ENCODE measurements at regions of chr3 and their contacts with region 1.

Region 1: GRCh38 chr3:45037734-45038455 is 11.8 kb downstream of the CLEC3B start:
- DNase-seq: peak; percentile 95
- ATAC-seq: peak; percentile 84
- H3K4me3 Mint-ChIP-seq: no peak overlapping the region
- H3K27ac Mint-ChIP-seq: no peak overlapping the region
- H3K4me1 Mint-ChIP-seq: peaks cover 45% of the 10 kb centered on the region
- H3K27me3 Mint-ChIP-seq: peaks cover 15% of the 10 kb centered on the region

Region 2: GRCh38 chr3:45167011-45167911 is 129.4 kb after region 1 on chr3:
- CTCF ChIA-PET with region 1: interaction called, 4 read pairs
- POLR2A ChIA-PET with region 1: no interaction called
- intact Hi-C with region 1: loop called (anchors 1 to 5 kb)
- DNase-seq: peak; percentile 94
- ATAC-seq: peak; percentile 96
- H3K4me3 Mint-ChIP-seq: peak overlapping the region; percentile 63
- H3K27ac Mint-ChIP-seq: peak overlapping the region; percentile 98
- H3K4me1 Mint-ChIP-seq: peaks cover 37% of the 10 kb centered on the region
- H3K27me3 Mint-ChIP-seq: no peaks in the 10 kb centered on the region

Region 3: GRCh38 chr3:45343947-45344346 is 306.1 kb after region 1 on chr3:
- CTCF ChIA-PET with region 1: interaction called, 7 read pairs
- POLR2A ChIA-PET with region 1: no interaction called
- intact Hi-C with region 1: loop called (anchors 1 to 5 kb)
- DNase-seq: peak; percentile 9
- ATAC-seq: peak; percentile 36
- H3K4me3 Mint-ChIP-seq: no peak overlapping the region
- H3K27ac Mint-ChIP-seq: no peak overlapping the region
- H3K4me1 Mint-ChIP-seq: no peaks in the 10 kb centered on the region
- H3K27me3 Mint-ChIP-seq: no peaks in the 10 kb centered on the region

Region 4: GRCh38 chr3:45499529-45499928 is 461.6 kb after region 1 on chr3:
- CTCF ChIA-PET with region 1: interaction called, 8 read pairs
- POLR2A ChIA-PET with region 1: interaction called, 3 read pairs
- intact Hi-C with region 1: loop called in 1 of 2 experiments (anchors 2 kb)
- DNase-seq: no peak
- ATAC-seq: no peak
- H3K4me3 Mint-ChIP-seq: no peak overlapping the region
- H3K27ac Mint-ChIP-seq: no peak overlapping the region
- H3K4me1 Mint-ChIP-seq: peaks cover 15% of the 10 kb centered on the region
- H3K27me3 Mint-ChIP-seq: no peaks in the 10 kb centered on the region

Region 5: GRCh38 chr3:45656575-45657363 is 618.9 kb after region 1 on chr3:
- CTCF ChIA-PET with region 1: interaction called, 10 read pairs
- POLR2A ChIA-PET with region 1: no interaction called
- intact Hi-C with region 1: loop called (anchors 1 kb)
- DNase-seq: peak; percentile 94
- ATAC-seq: peak; percentile 93
- H3K4me3 Mint-ChIP-seq: no peak overlapping the region
- H3K27ac Mint-ChIP-seq: no peak overlapping the region
- H3K4me1 Mint-ChIP-seq: peaks cover 16% of the 10 kb centered on the region
- H3K27me3 Mint-ChIP-seq: no peaks in the 10 kb centered on the region

Region 6: GRCh38 chr3:46078712-46079400 is 1041.0 kb after region 1 on chr3:
- CTCF ChIA-PET with region 1: interaction called, 3 read pairs
- POLR2A ChIA-PET with region 1: no interaction called
- intact Hi-C with region 1: loop called in 1 of 2 experiments (anchors 2 kb)
- DNase-seq: peak; percentile 93
- ATAC-seq: peak; percentile 98
- H3K4me3 Mint-ChIP-seq: no peak overlapping the region
- H3K27ac Mint-ChIP-seq: no peak overlapping the region
- H3K4me1 Mint-ChIP-seq: peaks cover 3% of the 10 kb centered on the region
- H3K27me3 Mint-ChIP-seq: peaks cover 23% of the 10 kb centered on the region